Activated CD4-positive, alpha-beta T cell treated with anti-CD3 and anti-CD28 coated beads, Interleukin-2, amount 10 ng/mL, durations not matched to agents 7 days and 5 days (primary cell): ENCODE measurements at regions of chr19 and their contacts with region 1.

Region 1: DNA sequence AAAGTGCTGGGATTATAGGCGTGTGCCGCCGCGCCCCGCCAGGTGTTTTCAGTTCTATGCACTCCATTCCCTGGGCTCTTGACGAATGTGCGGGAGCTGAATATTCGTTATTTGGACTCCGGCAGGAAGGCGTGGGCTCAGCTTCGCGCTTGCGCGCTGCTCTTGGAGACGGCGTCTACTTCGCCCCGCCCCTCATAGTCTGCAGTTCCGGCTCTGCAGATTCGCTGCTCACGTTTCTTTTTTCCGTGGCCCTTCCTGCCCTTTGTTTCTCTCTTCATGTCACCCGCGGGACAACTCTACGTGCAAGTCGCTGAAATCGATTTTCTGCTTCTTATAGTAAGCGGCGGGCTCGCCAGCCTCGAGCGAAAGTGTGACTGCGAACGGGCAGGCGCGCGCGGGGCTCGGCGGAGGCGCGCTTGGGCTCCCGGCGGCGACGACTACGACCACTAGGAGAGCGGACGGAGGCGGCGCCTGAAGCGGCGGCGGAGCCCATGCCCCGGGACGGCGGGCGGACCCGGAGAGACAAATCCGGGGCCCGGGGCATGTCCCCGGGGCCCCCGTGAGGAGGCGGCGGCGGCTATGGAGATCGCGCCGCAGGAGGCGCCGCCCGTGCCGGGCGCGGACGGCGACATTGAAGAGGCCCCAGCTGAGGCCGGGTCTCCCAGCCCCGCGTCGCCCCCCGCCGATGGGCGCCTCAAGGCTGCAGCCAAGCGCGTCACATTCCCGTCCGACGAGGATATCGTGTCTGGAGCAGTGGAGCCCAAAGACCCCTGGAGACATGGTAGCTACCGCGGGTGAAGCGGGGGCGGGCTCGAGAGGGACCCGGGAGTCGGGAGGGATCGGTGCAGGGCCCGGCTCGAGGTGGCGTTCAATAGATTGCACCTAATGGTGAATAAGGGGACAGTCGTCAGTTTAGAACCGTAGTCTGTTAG is at the start of gene PPP1R37:
- DNase-seq: peak; percentile 95
- H3K4me3 Mint-ChIP-seq: peak within 1 kb of the TSS; percentile 87
- H3K27ac Mint-ChIP-seq: peak within 1 kb of the TSS; percentile 97
- H3K4me1 Mint-ChIP-seq: peaks cover 71% of the 10 kb centered on the region
- H3K27me3 Mint-ChIP-seq: no peaks in the 10 kb centered on the region
- total RNA-seq, gene PPP1R37: 21.1 to 21.7 TPM

Region 2: DNA sequence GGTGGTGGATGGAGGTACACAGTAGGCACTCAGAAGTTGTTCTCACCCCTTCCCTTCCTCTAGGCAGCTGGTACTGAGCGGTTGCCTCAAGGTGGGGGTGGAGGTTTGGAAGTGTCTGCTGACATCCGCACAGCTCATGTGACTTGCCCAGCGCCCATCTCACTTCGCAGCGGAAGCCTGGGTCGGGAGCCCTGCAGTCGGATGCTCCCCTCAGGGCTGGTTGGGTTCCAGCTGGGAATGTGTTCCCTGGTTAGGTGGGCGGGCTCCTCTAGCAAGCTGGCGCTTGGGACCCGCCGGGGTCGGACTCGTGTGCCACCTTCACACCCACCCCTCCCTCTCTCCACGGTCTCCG is 10.1 kb after region 1 on chr19:
- CTCF ChIA-PET with region 1: interaction called, 14 read pairs
- POLR2A ChIA-PET with region 1: no interaction called
- DNase-seq: peak; percentile 64
- H3K4me3 Mint-ChIP-seq: peak overlapping the region; percentile 44
- H3K27ac Mint-ChIP-seq: peak overlapping the region; percentile 82
- H3K4me1 Mint-ChIP-seq: peaks cover 54% of the 10 kb centered on the region
- H3K27me3 Mint-ChIP-seq: no peaks in the 10 kb centered on the region

Region 3: GRCh38 chr19:45224645-45225044 is 131.6 kb after region 1 on chr19:
- CTCF ChIA-PET with region 1: no interaction called
- POLR2A ChIA-PET with region 1: no interaction called
- DNase-seq: no peak
- H3K4me3 Mint-ChIP-seq: no peak overlapping the region
- H3K27ac Mint-ChIP-seq: no peak overlapping the region
- H3K4me1 Mint-ChIP-seq: no peaks in the 10 kb centered on the region
- H3K27me3 Mint-ChIP-seq: peaks cover 6% of the 10 kb centered on the region